Naive thymus-derived CD4-positive, alpha-beta T cell (primary cell): ENCODE measurements at regions of chr12 and their contacts with region 1.

Region 1: GRCh38 chr12:15789220-15790171 is at the start of gene EPS8:
- DNase-seq: peak; percentile 82 to 92 (median 91)
- ATAC-seq: peak; percentile 95
- H3K4me3 ChIP-seq: peak within 1 kb of the TSS; percentile 78
- H3K4me3 Mint-ChIP-seq: peak within 1 kb of the TSS; percentile 91 to 99 (median 96)
- H3K27ac ChIP-seq: peak within 1 kb of the TSS; percentile 63
- H3K27ac Mint-ChIP-seq: peak within 1 kb of the TSS; percentile 58 to 97 (median 84)
- H3K4me1 ChIP-seq: peaks cover 0 to 7% of the 10 kb centered on the region in 2 donors
- H3K4me1 Mint-ChIP-seq: peaks cover 10 to 17% (median 15%) of the 10 kb centered on the region in 7 donors
- H3K27me3 ChIP-seq: peaks cover 0 to 11% of the 10 kb centered on the region in 2 donors
- H3K27me3 Mint-ChIP-seq: peaks cover 26 to 74% (median 49%) of the 10 kb centered on the region in 5 donors
- total RNA-seq, gene EPS8: 2.0 to 3.1 (median 2.7) TPM

Region 2: GRCh38 chr12:14394317-14395073 is 1395.0 kb before region 1 on chr12:
- CTCF ChIA-PET with region 1: no interaction called
- POLR2A ChIA-PET with region 1: no interaction called
- intact Hi-C with region 1: loop called in 1 of 2 experiments (anchors 1 kb)
- DNase-seq: peak in 7 of 9 donors; percentile 57 to 82 (median 71)
- ATAC-seq: peak; percentile 86
- H3K4me3 ChIP-seq: peak overlapping the region; percentile 33
- H3K4me3 Mint-ChIP-seq: peak overlapping the region; percentile 49 to 87 (median 76)
- H3K27ac ChIP-seq: peak overlapping the region; percentile 75
- H3K27ac Mint-ChIP-seq: peak overlapping the region; percentile 83 to 97 (median 95)
- H3K4me1 ChIP-seq: peaks cover 62 to 84% of the 10 kb centered on the region in 2 donors
- H3K4me1 Mint-ChIP-seq: peaks cover 47 to 99% (median 91%) of the 10 kb centered on the region in 7 donors
- H3K27me3 ChIP-seq: no peaks in the 10 kb centered on the region
- H3K27me3 Mint-ChIP-seq: no peaks in the 10 kb centered on the region

Region 3: DNA sequence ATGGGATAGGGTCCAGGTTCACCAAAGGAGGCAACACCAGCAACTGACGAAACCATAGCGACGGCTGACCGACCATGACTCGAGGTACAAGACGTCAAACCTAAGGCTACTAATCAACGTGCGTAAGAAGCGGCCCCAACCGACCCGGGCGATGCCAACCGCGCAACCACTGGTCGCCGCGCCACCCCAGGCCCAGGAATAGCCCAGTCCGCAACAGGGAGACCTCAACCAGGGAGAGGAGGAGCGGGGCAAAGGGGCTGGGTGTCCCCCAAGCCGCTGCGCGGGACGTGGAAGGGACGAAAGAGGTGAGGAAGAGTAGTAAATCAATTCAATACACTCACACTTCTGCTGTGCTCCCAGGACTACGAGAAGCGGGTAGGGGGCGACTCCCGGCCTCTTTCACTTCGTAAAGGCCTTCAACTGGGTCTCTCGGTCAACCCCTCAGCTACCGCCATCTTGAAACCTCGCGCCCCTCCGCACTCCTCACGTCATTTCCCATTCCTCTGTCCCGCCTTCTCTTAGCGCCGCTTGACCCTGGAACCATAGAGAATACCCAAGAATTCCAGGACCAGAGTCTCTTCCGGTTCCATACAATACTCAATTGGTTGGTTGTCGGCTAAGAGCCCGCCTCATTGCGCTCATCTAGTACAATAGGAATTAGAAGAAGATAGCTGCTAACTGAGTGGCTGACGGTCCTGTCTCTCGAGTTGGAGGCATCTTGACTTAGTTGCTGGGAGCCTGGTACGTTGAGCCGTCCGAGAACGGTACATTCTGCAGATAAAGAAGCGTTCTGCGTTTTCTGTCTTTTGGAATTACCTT is 986.3 kb before region 1 on chr12 and contains the starts of genes C12orf60 and WBP11:
- CTCF ChIA-PET with region 1: no interaction called
- POLR2A ChIA-PET with region 1: no interaction called
- intact Hi-C with region 1: loop called in 1 of 2 experiments (anchors 10 kb)
- DNase-seq: peak; percentile 56 to 95 (median 91)
- ATAC-seq: peak; percentile 98
- H3K4me3 ChIP-seq: peak within 1 kb of the TSS; percentile 80
- H3K4me3 Mint-ChIP-seq: no peak within 1 kb of the TSS
- H3K27ac ChIP-seq: peak within 1 kb of the TSS; percentile 97
- H3K27ac Mint-ChIP-seq: no peak within 1 kb of the TSS
- H3K4me1 ChIP-seq: peaks cover 14 to 19% of the 10 kb centered on the region in 2 donors
- H3K4me1 Mint-ChIP-seq: peaks cover 0 to 26% (median 10%) of the 10 kb centered on the region in 7 donors
- H3K27me3 ChIP-seq: no peaks in the 10 kb centered on the region
- H3K27me3 Mint-ChIP-seq: no peaks in the 10 kb centered on the region
- total RNA-seq, gene C12orf60: 0.22 to 1.7 (median 1.2) TPM in 4 of 5 experiments, not detected in the other
- total RNA-seq, gene WBP11: 77.9 to 129 (median 90.4) TPM

Region 4: DNA sequence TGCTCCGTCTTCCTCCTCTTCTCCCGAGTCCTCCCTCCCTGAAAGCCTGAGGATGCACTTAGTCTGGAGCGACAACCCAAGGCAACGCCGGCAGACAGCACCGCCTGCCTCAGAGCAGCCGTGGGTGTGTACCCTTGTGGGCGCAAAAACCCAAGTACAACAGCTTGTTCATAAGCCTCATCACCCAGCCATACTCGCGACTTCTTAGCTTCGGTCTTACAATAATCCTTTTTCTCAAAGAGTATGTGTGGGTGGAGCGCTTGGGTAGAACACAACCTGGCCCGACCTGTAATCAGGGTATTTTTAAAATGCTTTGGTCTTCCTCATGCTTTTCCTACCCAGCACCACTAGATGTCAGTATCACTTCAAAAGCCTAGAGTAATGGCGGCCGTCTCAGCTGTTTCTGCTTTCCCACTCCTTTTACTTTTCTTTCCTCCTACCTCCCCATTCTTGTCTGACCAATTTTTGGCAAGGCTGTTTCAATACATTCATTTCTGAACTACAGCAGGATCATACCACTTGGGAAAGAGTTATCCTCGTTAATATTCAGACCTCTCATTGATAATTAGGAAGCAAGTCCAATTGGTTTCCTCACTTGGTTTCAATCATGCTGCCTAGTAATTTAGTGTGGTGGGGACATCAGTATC is 199.2 kb before region 1 on chr12:
- CTCF ChIA-PET with region 1: interaction called, 5 read pairs
- POLR2A ChIA-PET with region 1: no interaction called
- intact Hi-C with region 1: loop called in 1 of 2 experiments (anchors 1 kb)
- DNase-seq: peak; percentile 12 to 74 (median 66)
- ATAC-seq: peak; percentile 98
- H3K4me3 ChIP-seq: peak overlapping the region; percentile 40
- H3K4me3 Mint-ChIP-seq: peak overlapping the region; percentile 63 to 88 (median 78)
- H3K27ac ChIP-seq: no peak overlapping the region
- H3K27ac Mint-ChIP-seq: peak overlapping the region in 8 of 9 donors; percentile 61 to 86 (median 69)
- H3K4me1 ChIP-seq: peaks cover 0 to 5% of the 10 kb centered on the region in 2 donors
- H3K4me1 Mint-ChIP-seq: peaks cover 0 to 12% (median 8%) of the 10 kb centered on the region in 7 donors
- H3K27me3 ChIP-seq: no peaks in the 10 kb centered on the region
- H3K27me3 Mint-ChIP-seq: peaks cover 0 to 4% (median 0%) of the 10 kb centered on the region in 5 donors

Region 5: DNA sequence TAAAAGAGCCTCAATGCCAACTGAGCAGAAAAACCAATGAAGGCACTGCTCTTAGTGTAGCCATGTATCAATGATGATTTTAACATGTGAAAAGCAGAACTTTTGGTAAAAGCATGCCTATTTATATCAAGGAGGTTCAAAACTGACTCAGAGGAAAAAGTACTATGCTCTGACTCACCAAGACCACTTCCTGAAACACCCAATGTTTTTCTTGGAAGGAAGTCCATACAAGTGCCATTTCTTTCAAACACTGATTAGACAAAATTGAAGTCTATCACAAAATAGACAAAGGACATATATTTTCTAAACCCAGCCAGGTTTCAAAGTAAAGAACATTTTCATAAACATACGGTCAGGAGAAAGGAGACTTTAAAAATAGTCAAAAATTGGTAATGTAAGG is 88.9 kb before region 1 on chr12:
- CTCF ChIA-PET with region 1: no interaction called
- POLR2A ChIA-PET with region 1: no interaction called
- intact Hi-C with region 1: loop called in 1 of 2 experiments (anchors 5 kb)
- DNase-seq: no peak
- ATAC-seq: peak; percentile 64
- H3K4me3 ChIP-seq: no peak overlapping the region
- H3K4me3 Mint-ChIP-seq: peak overlapping the region in 1 of 10 donors; percentile 74
- H3K27ac ChIP-seq: no peak overlapping the region
- H3K27ac Mint-ChIP-seq: peak overlapping the region in 1 of 9 donors; percentile 77
- H3K4me1 ChIP-seq: no peaks in the 10 kb centered on the region
- H3K4me1 Mint-ChIP-seq: peaks cover 0 to 35% (median 7%) of the 10 kb centered on the region in 7 donors
- H3K27me3 ChIP-seq: no peaks in the 10 kb centered on the region
- H3K27me3 Mint-ChIP-seq: peaks cover 0 to 12% (median 0%) of the 10 kb centered on the region in 5 donors

Region 6: DNA sequence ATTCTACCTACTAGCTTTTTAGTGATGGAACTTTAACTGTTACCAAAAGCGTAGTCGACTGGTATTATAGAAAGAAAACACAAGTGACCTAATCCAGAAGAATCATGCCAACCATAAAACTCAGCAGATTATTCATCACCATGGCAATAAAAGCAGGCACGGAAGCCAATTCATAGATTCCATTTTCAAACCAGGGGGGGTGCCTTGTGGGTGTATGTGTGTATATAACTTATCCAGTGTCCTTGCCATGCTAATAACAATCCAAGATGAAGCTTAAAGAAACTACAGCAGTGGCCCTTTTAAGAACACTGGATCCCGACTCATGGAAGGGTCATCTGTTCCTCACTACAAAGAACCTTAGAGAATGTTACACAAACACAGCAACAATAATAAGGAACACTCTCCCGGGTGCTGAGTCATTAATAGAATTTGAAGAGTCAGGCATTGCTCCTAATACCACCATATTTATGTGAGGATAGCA is 61.3 kb before region 1 on chr12:
- CTCF ChIA-PET with region 1: no interaction called
- POLR2A ChIA-PET with region 1: no interaction called
- intact Hi-C with region 1: no loop called
- DNase-seq: no peak
- ATAC-seq: no peak
- H3K4me3 ChIP-seq: no peak overlapping the region
- H3K4me3 Mint-ChIP-seq: no peak overlapping the region
- H3K27ac ChIP-seq: no peak overlapping the region
- H3K27ac Mint-ChIP-seq: no peak overlapping the region
- H3K4me1 ChIP-seq: no peaks in the 10 kb centered on the region
- H3K4me1 Mint-ChIP-seq: no peaks in the 10 kb centered on the region
- H3K27me3 ChIP-seq: no peaks in the 10 kb centered on the region
- H3K27me3 Mint-ChIP-seq: peaks cover 4 to 28% (median 8%) of the 10 kb centered on the region in 5 donors

Region 7: GRCh38 chr12:16785524-16785923 is 996.0 kb after region 1 on chr12:
- CTCF ChIA-PET with region 1: no interaction called
- POLR2A ChIA-PET with region 1: no interaction called
- intact Hi-C with region 1: no loop called
- DNase-seq: no peak
- ATAC-seq: no peak
- H3K4me3 ChIP-seq: no peak overlapping the region
- H3K4me3 Mint-ChIP-seq: no peak overlapping the region
- H3K27ac ChIP-seq: no peak overlapping the region
- H3K27ac Mint-ChIP-seq: no peak overlapping the region
- H3K4me1 ChIP-seq: no peaks in the 10 kb centered on the region
- H3K4me1 Mint-ChIP-seq: no peaks in the 10 kb centered on the region
- H3K27me3 ChIP-seq: no peaks in the 10 kb centered on the region
- H3K27me3 Mint-ChIP-seq: no peaks in the 10 kb centered on the region